Activated CD4-positive, alpha-beta T cell treated with anti-CD3 and anti-CD28 coated beads, Interleukin-2, amount 10 ng/mL, durations not matched to agents 24 days and 14 days (primary cell): ENCODE measurements at regions of chr1 and their contacts with region 1.

Region 1: GRCh38 chr1:156054500-156055280 is at the start of gene LAMTOR2:
- DNase-seq: peak; percentile 99
- H3K4me3 Mint-ChIP-seq: peak within 1 kb of the TSS; percentile 98
- H3K27ac Mint-ChIP-seq: peak within 1 kb of the TSS; percentile 89
- H3K4me1 Mint-ChIP-seq: peaks cover 30% of the 10 kb centered on the region
- H3K27me3 Mint-ChIP-seq: no peaks in the 10 kb centered on the region
- total RNA-seq, gene LAMTOR2: 69.9 and 73.0 TPM in 2 replicates

Region 2: DNA sequence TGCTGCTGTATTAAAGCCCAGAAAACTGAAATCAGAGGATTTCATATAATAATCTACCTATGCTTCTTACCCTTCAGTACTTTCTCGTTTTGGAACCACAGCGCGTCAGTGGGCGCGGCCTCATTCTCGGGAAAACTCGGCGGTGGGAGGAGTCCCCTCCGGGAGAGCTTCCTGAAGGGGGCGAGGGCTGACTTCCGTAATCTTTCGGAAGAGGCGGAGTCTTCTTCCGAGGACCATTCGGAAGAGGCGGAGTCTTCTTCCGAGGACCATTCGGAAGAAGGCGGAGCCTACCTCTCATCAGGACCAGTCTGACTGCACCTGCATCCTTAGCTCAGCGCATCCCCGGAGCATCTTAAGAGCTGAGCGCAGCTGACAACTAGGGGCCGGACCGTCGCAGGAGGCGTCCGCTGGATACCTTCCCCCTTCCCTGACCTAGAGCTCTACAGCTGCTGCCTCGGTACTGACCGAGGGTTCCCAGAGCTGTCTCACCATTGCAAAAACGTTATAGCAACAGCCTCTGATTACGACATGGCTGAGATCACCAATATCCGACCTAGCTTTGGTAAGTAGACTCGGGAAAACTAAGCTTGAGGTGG is 195.4 kb before region 1 on chr1 and contains the start of gene SYT11:
- intact Hi-C with region 1: loop called (anchors 1 kb)
- DNase-seq: peak; percentile 98
- H3K4me3 Mint-ChIP-seq: peak within 1 kb of the TSS; percentile 90
- H3K27ac Mint-ChIP-seq: peak within 1 kb of the TSS; percentile 95
- H3K4me1 Mint-ChIP-seq: peaks cover 36% of the 10 kb centered on the region
- H3K27me3 Mint-ChIP-seq: no peaks in the 10 kb centered on the region
- total RNA-seq, gene SYT11: 17.8 and 18.5 TPM in 2 replicates

Region 3: DNA sequence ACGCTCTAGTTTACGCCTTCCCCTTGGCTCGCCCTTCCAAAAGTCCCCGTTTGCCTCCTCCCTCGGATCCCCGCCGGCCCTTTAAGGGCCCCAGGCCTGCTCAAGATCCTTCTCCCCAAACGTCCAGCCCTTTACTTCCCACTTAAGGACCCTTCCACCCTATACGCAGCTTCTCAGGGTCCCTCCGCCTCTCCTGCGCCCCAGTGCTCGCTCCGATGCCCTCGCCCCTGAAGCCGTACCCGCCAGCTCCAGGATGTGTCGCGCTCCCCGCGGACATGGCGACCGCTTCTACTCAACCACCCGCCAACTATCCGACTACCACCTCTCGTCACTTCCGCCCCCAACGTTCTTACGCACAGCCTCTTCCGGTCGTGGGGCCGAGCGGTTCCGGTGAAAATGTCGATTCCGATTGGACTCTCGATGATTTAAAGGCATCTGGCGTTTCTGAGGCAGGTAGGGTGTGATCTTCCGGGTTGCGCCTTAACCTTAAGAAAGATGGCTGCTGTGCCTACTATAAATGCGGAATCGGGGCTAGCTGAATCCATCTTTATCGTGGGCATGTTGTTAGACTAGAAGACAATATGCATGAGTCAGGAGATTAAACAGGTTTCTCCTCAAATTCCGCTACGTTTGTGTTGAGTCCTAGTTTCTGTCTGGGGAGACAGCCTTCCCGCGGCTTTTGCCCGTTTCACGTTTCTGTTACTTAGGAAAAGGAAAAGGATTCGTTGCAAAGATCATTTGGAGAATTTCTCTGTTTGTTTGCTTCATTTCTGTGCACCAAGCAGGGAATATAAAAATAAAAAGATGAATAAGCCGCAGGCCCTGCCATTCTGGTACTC is 120.4 kb before region 1 on chr1 and contains the start of gene KHDC4:
- intact Hi-C with region 1: loop called (anchors 1 kb)
- DNase-seq: peak; percentile 98
- H3K4me3 Mint-ChIP-seq: no peak within 1 kb of the TSS
- H3K27ac Mint-ChIP-seq: no peak within 1 kb of the TSS
- H3K4me1 Mint-ChIP-seq: peaks cover 30% of the 10 kb centered on the region
- H3K27me3 Mint-ChIP-seq: no peaks in the 10 kb centered on the region
- total RNA-seq, gene KHDC4: 82.9 and 92.2 TPM in 2 replicates

Region 4: GRCh38 chr1:156001682-156002171 is 53.0 kb before region 1 on chr1:
- intact Hi-C with region 1: loop called (anchors 10 kb)
- DNase-seq: no peak
- H3K4me3 Mint-ChIP-seq: no peak overlapping the region
- H3K27ac Mint-ChIP-seq: no peak overlapping the region
- H3K4me1 Mint-ChIP-seq: peaks cover 21% of the 10 kb centered on the region
- H3K27me3 Mint-ChIP-seq: no peaks in the 10 kb centered on the region

Region 5: GRCh38 chr1:156082309-156083091 is 27.8 kb after region 1 on chr1 and contains the start of gene MEX3A:
- intact Hi-C with region 1: loop called (anchors 1 kb)
- DNase-seq: peak; percentile 90
- H3K4me3 Mint-ChIP-seq: peak within 1 kb of the TSS; percentile 87
- H3K27ac Mint-ChIP-seq: no peak within 1 kb of the TSS
- H3K4me1 Mint-ChIP-seq: peaks cover 9% of the 10 kb centered on the region
- H3K27me3 Mint-ChIP-seq: peaks cover 76% of the 10 kb centered on the region
- total RNA-seq, gene MEX3A: 0.24 and 0.84 TPM in 2 replicates

Region 6: DNA sequence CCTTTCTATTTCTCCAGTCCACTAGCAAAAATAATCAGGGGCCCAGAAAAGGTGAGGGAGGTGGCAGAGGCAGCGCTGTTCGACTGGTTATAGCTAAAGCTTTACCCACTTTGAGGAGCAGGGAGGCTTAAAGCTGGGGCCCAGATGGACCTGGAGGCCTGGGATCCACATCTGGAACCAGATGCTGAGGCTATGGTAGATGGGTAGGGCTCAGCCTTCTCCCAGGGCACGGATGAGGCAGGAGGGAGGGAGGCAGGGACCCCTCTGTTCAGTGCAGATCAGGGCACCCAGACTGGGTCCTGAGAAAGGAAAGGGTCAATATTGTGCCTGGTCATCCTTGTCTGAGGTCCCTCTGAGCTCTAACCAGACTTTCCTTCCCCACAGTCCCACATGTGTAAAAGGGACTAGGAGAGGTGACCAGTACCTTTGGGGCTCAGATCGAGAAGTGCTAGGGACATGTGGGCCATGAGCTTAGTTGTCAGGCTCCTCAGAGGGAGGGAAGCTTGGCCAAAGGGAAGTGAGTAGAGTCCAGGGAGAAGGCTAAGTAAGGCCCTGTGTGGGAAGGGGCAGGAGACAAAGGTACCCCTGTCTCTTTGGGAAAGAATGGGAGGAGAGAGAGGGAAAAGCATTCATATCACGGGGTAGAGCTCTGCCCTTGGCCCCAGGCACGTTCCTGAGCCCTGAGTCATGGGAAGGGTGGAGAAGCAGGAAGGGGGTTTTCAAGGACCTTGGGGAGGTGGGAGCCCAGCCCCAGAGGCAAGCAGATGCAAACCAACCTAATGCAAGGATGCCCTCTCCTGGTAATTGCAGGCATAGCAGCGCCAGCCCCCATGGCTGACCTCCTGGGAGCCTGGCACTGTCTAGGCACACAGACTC is 75.3 kb after region 1 on chr1:
- intact Hi-C with region 1: no loop called
- DNase-seq: peak; percentile 94
- H3K4me3 Mint-ChIP-seq: no peak overlapping the region
- H3K27ac Mint-ChIP-seq: peak overlapping the region; percentile 64
- H3K4me1 Mint-ChIP-seq: peaks cover 42% of the 10 kb centered on the region
- H3K27me3 Mint-ChIP-seq: peaks cover 4% of the 10 kb centered on the region

Region 7: GRCh38 chr1:156338180-156338973 is 283.7 kb after region 1 on chr1 and contains the starts of genes CCT3 and TSACC:
- intact Hi-C with region 1: loop called (anchors 5 kb)
- DNase-seq: peak; percentile 100
- H3K4me3 Mint-ChIP-seq: peak within 1 kb of the TSS; percentile 99
- H3K27ac Mint-ChIP-seq: peak within 1 kb of the TSS; percentile 97
- H3K4me1 Mint-ChIP-seq: peaks cover 26% of the 10 kb centered on the region
- H3K27me3 Mint-ChIP-seq: peaks cover 9% of the 10 kb centered on the region
- total RNA-seq, gene CCT3: 623 TPM in 2 replicates
- total RNA-seq, gene TSACC: 0.47 and 0.82 TPM in 2 replicates